ENCODE measurements at regions of chr12 and their contacts with region 1.

Region 1: DNA sequence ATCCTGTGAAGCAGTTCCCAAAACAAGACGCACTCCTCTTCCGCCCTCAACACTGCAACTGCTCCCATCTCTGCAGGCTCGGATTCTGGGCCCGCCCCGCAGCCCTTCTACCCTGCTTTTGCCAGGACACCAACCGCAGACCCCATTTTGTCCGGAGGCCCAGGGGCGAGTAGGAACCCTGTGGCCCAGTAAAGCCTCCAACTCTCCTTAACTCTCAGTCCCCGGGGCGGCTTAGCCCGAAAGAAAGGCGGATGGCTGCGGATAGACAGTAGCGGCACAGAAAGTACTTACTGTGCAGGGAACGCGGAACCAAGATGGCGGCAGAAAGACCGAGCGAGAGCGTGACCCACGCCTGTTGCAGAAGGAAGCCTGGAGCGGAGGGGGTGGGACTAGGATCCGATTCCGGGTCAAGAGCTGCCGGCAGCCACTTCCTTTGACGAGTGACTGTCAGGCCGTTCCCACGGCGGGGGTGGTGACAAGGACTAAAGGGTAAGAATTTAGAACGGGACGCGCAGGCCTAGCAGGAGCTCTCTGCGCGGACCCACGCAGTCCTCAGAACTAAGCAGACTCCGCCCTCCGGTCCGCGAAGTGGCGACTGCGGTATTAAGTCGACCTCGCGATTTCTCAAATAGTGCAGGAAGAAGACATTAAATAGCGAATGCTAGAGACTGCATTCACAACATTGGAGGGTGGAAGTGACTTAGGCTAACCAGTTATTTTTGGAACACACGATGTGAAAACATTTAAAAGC is at the start of gene NACA:
- DNase-seq: peak; percentile 95
- ATAC-seq: peak; percentile 97
- H3K4me3 ChIP-seq: peak within 1 kb of the TSS; percentile 84 to 94 (median 92)
- H3K27ac ChIP-seq: peak within 1 kb of the TSS; percentile 92
- H3K4me1 ChIP-seq: peaks cover 36% of the 10 kb centered on the region
- H3K27me3 ChIP-seq: peaks cover 0 to 6% of the 10 kb centered on the region in 2 experiments; a peak in 1 of 5 replicates
- CTCF ChIP-seq: peak; percentile 24; the same call in 1 of the 2 replicates
- EP300 ChIP-seq: peak in 1 of 2 experiments; percentile 41; a peak in 1 of 4 replicates
- POLR2A ChIP-seq: peak; percentile 92 to 97
- RAD21 ChIP-seq: no peak; the same call in 1 of the 2 replicates
- total RNA-seq, gene NACA: 1,700 and 2,295 TPM in 2 replicates

Region 2: DNA sequence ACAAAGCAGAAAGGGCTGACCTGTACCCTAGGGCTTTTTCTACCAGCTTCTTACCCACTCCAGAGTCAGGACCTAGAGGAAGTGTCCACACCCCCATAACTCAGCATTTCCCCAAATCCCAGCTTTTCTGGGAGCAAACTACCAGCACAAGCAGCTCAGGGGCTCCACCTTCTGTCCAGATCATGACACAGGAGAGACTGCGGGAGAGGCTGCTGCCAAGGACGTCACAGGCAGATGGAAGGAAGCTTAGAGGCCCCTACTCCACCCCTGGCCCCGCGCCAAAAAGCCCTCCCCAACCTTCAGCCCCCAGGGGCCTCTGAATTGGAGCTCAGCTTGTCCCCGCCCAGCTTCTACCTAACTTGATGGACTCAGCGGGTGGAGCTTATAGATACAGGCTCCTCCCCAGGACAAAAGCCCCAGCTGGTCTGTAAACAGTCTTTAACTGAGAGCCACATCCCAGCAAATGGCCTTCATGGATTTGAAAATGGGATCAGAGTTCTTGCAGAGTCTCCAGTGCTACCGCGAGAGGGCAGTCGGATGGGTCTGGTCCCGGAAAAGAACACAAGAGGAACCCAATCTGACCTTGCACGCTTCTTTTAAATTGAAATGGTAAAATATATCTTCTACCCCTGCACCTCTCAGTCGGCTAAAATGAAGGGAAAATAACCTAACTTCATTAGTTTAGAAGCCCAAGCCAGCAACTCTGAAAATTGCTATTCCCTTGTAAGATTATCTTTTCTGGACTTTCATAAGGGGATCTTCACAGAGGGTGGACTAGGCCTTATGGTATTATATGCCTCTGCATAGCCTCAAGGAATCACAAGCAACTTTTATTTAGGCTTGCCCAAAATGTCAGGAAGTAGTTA is 88.2 kb before region 1 on chr12:
- CTCF ChIA-PET with region 1: no interaction called
- POLR2A ChIA-PET with region 1: interaction called, 19 read pairs
- in situ Hi-C with region 1: loop called (anchors 10 kb)
- intact Hi-C with region 1: loop called (anchors 10 kb)
- DNase-seq: peak; percentile 100
- ATAC-seq: peak; percentile 74
- H3K4me3 ChIP-seq: peak overlapping the region; percentile 68 to 92 (median 80)
- H3K27ac ChIP-seq: peak overlapping the region; percentile 92
- H3K4me1 ChIP-seq: peaks cover 35% of the 10 kb centered on the region
- H3K27me3 ChIP-seq: peaks cover 0 to 3% of the 10 kb centered on the region in 2 experiments; a peak in 1 of 5 replicates
- CTCF ChIP-seq: peak; percentile 79
- EP300 ChIP-seq: peak in 1 of 2 experiments; percentile 80; a peak in 2 of 4 replicates
- POLR2A ChIP-seq: peak in 1 of 2 experiments; percentile 47; a peak in 2 of 4 replicates
- RAD21 ChIP-seq: peak; percentile 64

Region 3: DNA sequence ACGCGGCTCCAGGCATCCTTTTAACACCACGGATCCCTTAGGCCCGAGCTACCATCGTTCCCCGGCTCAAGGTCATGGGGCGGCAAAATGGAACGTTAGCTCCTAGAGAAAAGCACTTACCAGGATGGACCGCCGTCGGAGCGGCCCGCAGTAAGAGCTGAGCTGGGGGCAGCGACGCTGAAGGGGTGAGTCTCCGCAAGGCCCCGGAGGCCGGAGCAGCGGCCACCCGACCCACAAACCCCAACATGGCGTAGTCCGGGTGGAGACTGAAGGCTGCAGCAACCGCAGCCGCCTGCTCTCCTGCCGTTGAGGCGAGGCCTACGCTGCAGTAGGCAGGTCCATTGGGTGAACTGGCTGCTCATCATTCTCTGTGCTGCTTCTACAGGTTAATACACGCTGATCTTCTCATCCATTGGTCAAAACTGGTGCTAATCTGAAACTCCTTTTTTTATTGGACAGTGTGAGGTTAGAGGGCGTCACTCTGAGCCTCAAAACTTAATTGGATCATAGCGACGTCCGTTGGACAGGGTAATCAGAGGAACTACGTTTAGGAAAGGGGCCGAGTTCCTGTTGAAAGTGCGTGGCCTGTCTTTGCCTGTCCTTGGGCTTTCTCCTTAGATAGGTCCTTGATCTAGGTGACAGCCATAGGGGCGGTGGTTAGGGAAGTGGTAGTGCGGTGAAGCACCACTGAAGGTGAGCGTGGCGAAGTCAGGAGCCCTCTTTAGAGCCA is 79.3 kb before region 1 on chr12 and contains the start of gene ATP5F1B:
- CTCF ChIA-PET with region 1: no interaction called
- POLR2A ChIA-PET with region 1: interaction called, 15 read pairs
- in situ Hi-C with region 1: loop called (anchors 10 kb)
- intact Hi-C with region 1: loop called (anchors 10 kb)
- DNase-seq: peak; percentile 100
- ATAC-seq: peak; percentile 99
- H3K4me3 ChIP-seq: peak within 1 kb of the TSS; percentile 75 to 89 (median 77)
- H3K27ac ChIP-seq: peak within 1 kb of the TSS; percentile 84
- H3K4me1 ChIP-seq: peaks cover 35% of the 10 kb centered on the region
- H3K27me3 ChIP-seq: no peaks in the 10 kb centered on the region; a peak in 1 of 5 replicates
- CTCF ChIP-seq: no peak
- EP300 ChIP-seq: no peak
- POLR2A ChIP-seq: peak; percentile 99
- RAD21 ChIP-seq: no peak; the same call in 1 of the 2 replicates
- total RNA-seq, gene ATP5F1B: 1,051 and 1,399 TPM in 2 replicates

Region 4: DNA sequence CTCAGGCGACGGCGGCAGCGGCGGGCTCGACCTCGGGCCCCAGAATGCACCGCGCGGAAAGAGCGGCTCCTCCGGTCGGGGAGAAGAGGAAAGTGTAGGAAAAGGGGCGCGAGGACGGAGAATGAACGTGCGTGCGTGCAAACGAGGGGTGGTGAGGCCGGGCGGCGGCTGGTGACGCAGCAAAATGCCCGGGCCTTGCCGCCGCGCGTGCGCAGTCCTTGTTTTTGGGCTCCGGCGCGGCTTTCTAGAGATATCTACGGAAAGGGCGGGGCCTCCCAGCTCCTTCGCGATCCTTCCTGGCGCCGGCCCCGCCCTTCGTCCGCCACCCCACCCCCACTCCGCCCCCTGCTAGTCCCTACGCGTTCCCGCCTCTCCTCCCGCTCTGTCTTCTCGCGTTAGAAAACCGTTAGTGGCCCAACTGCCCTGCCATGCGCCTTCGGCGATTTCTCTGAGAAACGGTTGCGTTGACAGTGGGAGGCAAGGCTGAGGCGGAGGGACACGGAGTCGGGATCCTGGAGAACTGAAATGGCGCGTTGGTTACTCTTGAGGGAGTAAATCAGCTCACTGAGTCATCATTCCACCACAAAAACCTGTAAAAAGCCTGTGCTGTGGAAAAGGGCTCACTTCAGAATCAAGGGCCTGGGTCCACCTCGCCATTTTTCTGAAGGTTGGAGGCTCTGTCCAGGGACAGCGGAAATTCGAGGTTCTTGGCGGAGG is 36.9 kb before region 1 on chr12 and contains the start of gene PTGES3:
- CTCF ChIA-PET with region 1: no interaction called
- POLR2A ChIA-PET with region 1: interaction called, 42 read pairs
- in situ Hi-C with region 1: loop called (anchors 5 kb)
- intact Hi-C with region 1: loop called (anchors 1 kb)
- DNase-seq: peak; percentile 91
- ATAC-seq: peak; percentile 82
- H3K4me3 ChIP-seq: peak within 1 kb of the TSS; percentile 96 to 98 (median 98)
- H3K27ac ChIP-seq: peak within 1 kb of the TSS; percentile 99
- H3K4me1 ChIP-seq: peaks cover 17% of the 10 kb centered on the region
- H3K27me3 ChIP-seq: no peaks in the 10 kb centered on the region; a peak in 1 of 5 replicates
- CTCF ChIP-seq: 0 out of 2 replicates have a peak, but pooled peaks have one; percentile 3
- EP300 ChIP-seq: no peak; a peak in 1 of 4 replicates
- POLR2A ChIP-seq: peak; percentile 58 to 75
- RAD21 ChIP-seq: no peak
- total RNA-seq, gene PTGES3: 159 and 290 TPM in 2 replicates

Region 5: GRCh38 chr12:56751712-56752598 is 26.8 kb after region 1 on chr12 and contains the start of gene PRIM1:
- CTCF ChIA-PET with region 1: no interaction called
- POLR2A ChIA-PET with region 1: interaction called, 13 read pairs
- in situ Hi-C with region 1: no loop called
- intact Hi-C with region 1: loop called (anchors 2 kb)
- DNase-seq: peak; percentile 65
- ATAC-seq: peak; percentile 92
- H3K4me3 ChIP-seq: peak within 1 kb of the TSS; percentile 63 to 86 (median 85)
- H3K27ac ChIP-seq: peak within 1 kb of the TSS; percentile 83
- H3K4me1 ChIP-seq: peaks cover 30% of the 10 kb centered on the region
- H3K27me3 ChIP-seq: no peaks in the 10 kb centered on the region
- CTCF ChIP-seq: no peak
- EP300 ChIP-seq: 0 out of 4 replicates have a peak, but pooled peaks of 1 of the 2 experiments have one; percentile 19
- POLR2A ChIP-seq: peak; percentile 72 to 73
- RAD21 ChIP-seq: peak; percentile 21; the same call in 1 of the 2 replicates
- total RNA-seq, gene PRIM1: 47.3 and 67.0 TPM in 2 replicates

Region 6: DNA sequence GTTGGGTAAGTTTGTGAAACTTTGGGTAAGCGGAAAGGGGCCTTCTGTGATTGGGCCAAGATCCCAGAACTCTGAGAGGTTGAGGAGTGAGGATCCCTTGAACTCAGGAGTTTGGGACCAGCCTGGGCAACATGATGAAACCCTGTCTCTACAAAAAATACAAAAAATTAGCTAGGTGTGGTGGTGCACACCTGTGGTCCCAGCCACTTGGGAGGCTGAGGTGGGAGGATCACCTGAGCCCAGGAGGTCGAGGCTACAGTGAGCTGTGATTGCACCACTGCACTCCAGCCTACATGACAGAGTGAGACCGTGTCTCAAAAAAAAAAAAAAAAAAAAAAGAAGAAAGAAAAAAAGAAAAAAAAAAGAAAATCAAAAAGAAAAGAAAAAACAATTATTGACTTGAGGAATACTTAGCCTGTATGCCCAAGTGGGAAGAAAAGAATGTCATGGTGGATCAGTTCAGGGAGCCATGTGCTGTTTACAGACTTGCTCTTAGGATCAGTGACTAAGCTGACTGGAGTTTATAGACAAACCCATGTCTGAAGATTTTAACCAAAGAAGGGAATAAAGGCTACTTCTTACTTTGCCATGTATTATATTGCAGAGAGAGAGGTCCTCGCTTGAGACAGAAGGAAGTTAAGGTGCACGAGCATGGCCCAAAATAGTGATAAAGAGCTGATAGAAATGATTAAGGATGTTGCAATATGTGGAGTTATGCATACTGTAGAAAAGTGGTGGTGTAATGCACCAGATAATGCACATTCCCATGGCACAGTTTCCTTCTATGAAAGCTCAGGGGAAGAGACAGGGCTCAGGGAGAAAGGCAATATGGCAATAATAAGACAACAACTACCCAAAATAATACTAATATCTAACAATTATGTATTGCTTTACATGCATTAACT is 38.9 kb after region 1 on chr12:
- CTCF ChIA-PET with region 1: no interaction called
- POLR2A ChIA-PET with region 1: interaction called, 15 read pairs
- in situ Hi-C with region 1: no loop called
- intact Hi-C with region 1: no loop called
- DNase-seq: no peak
- ATAC-seq: no peak
- H3K4me3 ChIP-seq: no peak overlapping the region
- H3K27ac ChIP-seq: no peak overlapping the region
- H3K4me1 ChIP-seq: peaks cover 67% of the 10 kb centered on the region
- H3K27me3 ChIP-seq: no peaks in the 10 kb centered on the region
- CTCF ChIP-seq: no peak
- EP300 ChIP-seq: no peak
- POLR2A ChIP-seq: no peak
- RAD21 ChIP-seq: no peak

Region 7: GRCh38 chr12:58695263-58695662 is 1970.1 kb after region 1 on chr12:
- CTCF ChIA-PET with region 1: no interaction called
- POLR2A ChIA-PET with region 1: no interaction called
- in situ Hi-C with region 1: no loop called
- intact Hi-C with region 1: no loop called
- DNase-seq: no peak
- ATAC-seq: no peak
- H3K4me3 ChIP-seq: no peak overlapping the region
- H3K27ac ChIP-seq: no peak overlapping the region
- H3K4me1 ChIP-seq: no peaks in the 10 kb centered on the region
- H3K27me3 ChIP-seq: no peaks in the 10 kb centered on the region
- CTCF ChIP-seq: no peak
- EP300 ChIP-seq: no peak
- POLR2A ChIP-seq: no peak
- RAD21 ChIP-seq: no peak

Measured in HepG2 (cell line).